Right ventricle myocardium inferior (tissue), 1 donor: ENCODE measurements at regions of chr22 and their contacts with region 1.

Region 1: DNA sequence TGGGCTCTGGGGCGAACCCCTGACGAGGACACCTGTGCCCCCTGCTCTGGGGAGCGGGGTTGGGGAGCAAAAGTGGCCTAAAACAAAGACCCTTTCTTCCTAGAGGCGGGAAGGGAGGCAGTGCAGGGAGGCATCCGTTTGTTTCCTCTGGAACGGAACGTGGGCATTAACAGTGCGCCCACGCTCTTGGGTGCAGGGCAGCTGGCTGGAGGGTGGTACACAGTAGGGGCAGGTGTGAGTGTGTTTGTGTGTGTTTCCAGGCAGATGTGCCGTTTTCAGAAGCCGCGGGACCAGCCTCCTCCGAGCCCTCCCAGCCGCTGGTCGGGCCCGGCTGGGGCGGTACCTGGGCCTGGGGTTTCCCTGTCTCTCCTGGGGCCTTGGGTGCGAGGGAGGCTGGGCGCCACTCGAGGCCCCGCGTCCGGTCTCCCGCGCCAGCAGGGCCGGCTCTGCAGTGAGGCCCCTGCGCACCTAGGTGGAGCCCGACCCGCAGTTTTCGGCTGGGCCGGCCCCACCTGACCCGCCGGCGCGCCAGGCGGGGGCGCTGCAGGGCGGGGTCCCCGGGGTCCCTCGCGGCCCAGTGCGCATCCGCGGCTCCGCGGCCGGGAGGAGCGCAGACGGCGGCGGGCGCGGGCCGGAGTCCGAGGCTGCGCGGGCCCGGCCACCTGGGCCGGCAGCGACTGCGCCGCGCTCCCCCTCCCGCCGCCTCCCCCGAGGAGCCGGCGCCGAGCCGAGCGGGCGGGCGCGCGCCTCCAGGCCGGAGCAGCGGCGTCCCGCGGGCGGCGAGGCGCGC is 1252.7 kb downstream of the BRD1 start:
- DNase-seq: peak; percentile 41
- ATAC-seq: no peak

Region 2: GRCh38 chr22:48500471-48501230 is 74.3 kb before region 1 on chr22:
- intact Hi-C with region 1: no loop called
- DNase-seq: peak; percentile 47
- ATAC-seq: no peak

Region 3: DNA sequence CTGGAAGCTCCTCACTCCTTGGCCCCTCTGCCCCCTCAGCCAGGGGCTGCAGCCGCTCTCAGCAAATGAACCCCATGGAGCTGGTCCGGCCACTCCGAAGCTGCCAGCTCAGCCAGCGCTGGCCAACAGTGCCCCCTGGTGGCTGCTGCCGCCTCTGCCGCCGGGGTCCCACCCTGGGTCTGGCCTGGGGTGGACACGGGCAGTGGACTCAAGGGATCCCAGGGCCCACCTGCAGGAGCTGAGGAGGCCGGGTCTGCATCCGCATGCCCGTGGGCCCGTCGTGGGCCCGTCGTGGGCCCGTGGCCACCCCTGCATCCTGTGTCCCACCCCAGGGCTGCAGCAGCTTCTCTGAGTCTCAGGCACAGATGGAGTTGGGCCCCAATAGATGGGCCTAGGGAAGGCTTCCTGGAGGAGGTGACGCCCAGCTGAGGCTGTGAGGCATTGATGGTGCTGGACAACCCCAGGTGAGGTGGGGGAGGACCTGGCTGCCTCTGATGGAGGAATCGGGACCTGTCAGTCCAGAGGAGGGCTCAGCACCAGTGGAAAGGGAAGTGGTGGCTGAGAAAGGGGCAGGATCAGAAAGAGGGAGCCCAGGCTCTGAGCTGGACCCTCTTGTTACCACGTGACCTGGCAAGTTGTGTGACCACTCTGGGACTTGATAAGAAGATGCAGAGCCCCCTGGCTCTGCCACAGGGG is 730.4 kb after region 1 on chr22:
- intact Hi-C with region 1: loop called (anchors 10 kb)
- DNase-seq: peak; percentile 80
- ATAC-seq: peak; percentile 77

Region 4: GRCh38 chr22:49632199-49633009 is 1057.4 kb after region 1 on chr22:
- intact Hi-C with region 1: loop called (anchors 10 kb)
- DNase-seq: no peak
- ATAC-seq: peak; percentile 71